ENCODE measurements at regions of chr7 and their contacts with region 1.

Region 1: DNA sequence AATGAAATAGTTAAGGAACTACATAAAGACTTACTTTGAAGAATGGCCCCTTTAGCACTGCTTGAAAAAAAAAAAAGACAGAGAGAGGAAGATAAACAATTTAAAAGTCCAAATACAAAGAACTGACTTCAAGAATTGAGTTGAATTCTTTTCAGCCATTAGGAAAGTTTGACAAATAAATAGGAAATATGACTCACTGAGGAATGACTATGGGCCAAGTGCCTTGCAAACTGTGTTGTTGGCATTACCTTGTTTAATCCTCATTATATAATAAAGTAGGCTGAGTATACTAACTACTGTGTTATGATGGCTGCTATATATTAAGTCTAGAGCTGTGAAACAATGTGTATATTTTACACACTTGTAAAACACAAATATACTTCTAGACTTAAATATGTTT is 151.1 kb downstream of the ELMO1 start:
- DNase-seq: no peak
- ATAC-seq: no peak
- H3K4me3 Mint-ChIP-seq: no peak overlapping the region
- H3K27ac Mint-ChIP-seq: no peak overlapping the region
- H3K4me1 Mint-ChIP-seq: no peaks in the 10 kb centered on the region
- H3K27me3 Mint-ChIP-seq: no peaks in the 10 kb centered on the region

Region 2: DNA sequence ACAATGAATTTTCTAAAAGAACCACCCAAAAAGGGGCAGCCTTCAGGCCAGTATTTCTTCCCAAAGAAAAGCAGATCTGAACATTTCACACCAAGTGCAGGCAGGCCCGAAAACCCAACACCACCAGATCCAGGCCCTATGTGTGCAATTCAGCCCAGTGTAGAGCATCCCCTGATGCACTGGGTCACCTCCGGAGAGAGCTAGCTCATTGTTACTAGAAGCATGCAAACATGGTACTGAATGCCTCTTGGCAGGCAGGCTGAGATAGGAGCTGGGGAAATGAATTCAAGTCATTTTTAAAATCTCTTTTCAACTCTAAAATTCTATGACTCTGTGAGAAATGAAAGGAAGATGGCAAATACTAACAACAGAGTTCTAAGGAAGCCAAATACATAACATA is 23.7 kb before region 1 on chr7:
- CTCF ChIA-PET with region 1: no interaction called
- POLR2A ChIA-PET with region 1: no interaction called
- DNase-seq: no peak
- ATAC-seq: no peak
- H3K4me3 Mint-ChIP-seq: no peak overlapping the region
- H3K27ac Mint-ChIP-seq: no peak overlapping the region
- H3K4me1 Mint-ChIP-seq: peaks cover 15% of the 10 kb centered on the region
- H3K27me3 Mint-ChIP-seq: no peaks in the 10 kb centered on the region

Region 3: GRCh38 chr7:37284805-37285231 is 12.7 kb before region 1 on chr7:
- CTCF ChIA-PET with region 1: interaction called, 10 read pairs
- POLR2A ChIA-PET with region 1: no interaction called
- DNase-seq: peak; percentile 49
- ATAC-seq: no peak
- H3K4me3 Mint-ChIP-seq: no peak overlapping the region
- H3K27ac Mint-ChIP-seq: no peak overlapping the region
- H3K4me1 Mint-ChIP-seq: peaks cover 26% of the 10 kb centered on the region
- H3K27me3 Mint-ChIP-seq: no peaks in the 10 kb centered on the region

Region 4: GRCh38 chr7:37323966-37324365 is 26.4 kb after region 1 on chr7:
- CTCF ChIA-PET with region 1: no interaction called
- POLR2A ChIA-PET with region 1: no interaction called
- DNase-seq: no peak
- ATAC-seq: no peak
- H3K4me3 Mint-ChIP-seq: no peak overlapping the region
- H3K27ac Mint-ChIP-seq: no peak overlapping the region
- H3K4me1 Mint-ChIP-seq: peaks cover 4% of the 10 kb centered on the region
- H3K27me3 Mint-ChIP-seq: no peaks in the 10 kb centered on the region

Measured in activated CD8-positive, alpha-beta T cell treated with anti-CD3 and anti-CD28 coated beads, Interleukin-2, amount 10 ng/mL, durations not matched to agents 7 days and 5 days (primary cell).